Aorta (tissue), 5 donors: ENCODE measurements at regions of chr3 and their contacts with region 1.

Region 1: GRCh38 chr3:59857589-59858346 is 807.9 kb upstream of the CFAP20DC start:
- DNase-seq: peak; percentile 84 to 92
- ATAC-seq: peak; percentile 89
- H3K4me3 ChIP-seq: no peak overlapping the region
- H3K27ac ChIP-seq: no peak overlapping the region
- H3K4me1 ChIP-seq: no peaks in the 10 kb centered on the region
- H3K27me3 ChIP-seq: no peaks in the 10 kb centered on the region

Region 2: GRCh38 chr3:59575113-59576001 is 282.4 kb before region 1 on chr3:
- intact Hi-C with region 1: loop called (anchors 1 to 5 kb)
- DNase-seq: peak; percentile 86 to 94
- ATAC-seq: peak; percentile 81
- H3K4me3 ChIP-seq: no peak overlapping the region
- H3K27ac ChIP-seq: no peak overlapping the region
- H3K4me1 ChIP-seq: no peaks in the 10 kb centered on the region
- H3K27me3 ChIP-seq: no peaks in the 10 kb centered on the region

Region 3: GRCh38 chr3:59709702-59710553 is 147.8 kb before region 1 on chr3:
- intact Hi-C with region 1: no loop called
- DNase-seq: peak in 1 of 2 donors; percentile 85
- ATAC-seq: no peak
- H3K4me3 ChIP-seq: no peak overlapping the region
- H3K27ac ChIP-seq: no peak overlapping the region
- H3K4me1 ChIP-seq: no peaks in the 10 kb centered on the region
- H3K27me3 ChIP-seq: no peaks in the 10 kb centered on the region